Panc1 (cell line): ENCODE measurements at regions of chr1 and their contacts with region 1.

Region 1: DNA sequence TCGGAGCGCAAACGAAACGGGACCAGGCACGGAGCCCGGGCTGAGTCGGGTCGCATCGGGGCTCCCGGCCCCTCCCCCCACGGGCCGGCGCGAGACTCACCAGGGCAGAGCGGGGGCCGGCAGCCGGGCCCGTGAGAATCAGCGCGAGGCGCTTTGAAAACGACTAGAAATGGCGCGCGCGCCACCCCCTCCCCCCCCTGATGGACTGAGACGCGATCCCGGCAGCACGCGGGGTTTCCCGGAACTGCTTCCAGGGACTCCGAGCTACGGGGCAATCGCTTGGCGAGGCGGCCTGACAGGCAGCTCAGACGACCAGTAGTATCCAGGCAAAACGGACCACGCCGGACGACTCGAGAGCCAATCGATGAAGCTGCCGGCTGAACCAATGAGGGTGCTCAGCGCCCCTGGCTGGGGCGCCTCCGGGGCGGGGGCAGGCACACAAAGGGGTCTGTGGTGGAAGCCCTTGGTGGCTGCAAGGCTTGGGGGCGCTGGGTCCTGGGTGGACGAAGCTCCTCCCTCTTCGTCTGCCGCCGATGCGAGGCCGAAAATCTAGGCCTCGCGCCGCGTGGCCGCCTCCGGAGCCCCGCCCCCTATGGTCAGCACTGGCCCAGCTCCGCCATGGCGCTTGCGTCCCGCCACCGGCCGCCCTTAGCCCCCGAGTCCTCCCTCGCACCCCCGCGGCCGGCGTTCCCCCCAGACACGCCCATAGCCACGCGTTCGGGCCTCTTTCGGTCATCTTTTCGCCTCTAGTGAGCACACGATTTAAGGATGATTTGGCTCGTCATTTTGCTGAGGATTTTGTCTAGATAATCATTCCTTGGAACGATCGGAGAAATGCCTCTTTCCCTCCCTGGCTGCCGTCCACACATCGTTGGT is at the start of gene HNRNPR:
- DNase-seq: peak; percentile 98
- ATAC-seq: peak; percentile 96
- H3K4me3 ChIP-seq: peak within 1 kb of the TSS; percentile 81 to 94
- H3K27ac ChIP-seq: peak within 1 kb of the TSS; percentile 100
- H3K4me1 ChIP-seq: peaks cover 25% of the 10 kb centered on the region
- H3K27me3 ChIP-seq: no peaks in the 10 kb centered on the region
- CTCF ChIP-seq: no peak
- total RNA-seq, gene HNRNPR: 173 TPM

Region 2: GRCh38 chr1:22388671-22389450 is 955.5 kb before region 1 on chr1:
- CTCF ChIA-PET with region 1: no interaction called
- POLR2A ChIA-PET with region 1: no interaction called
- in situ Hi-C with region 1: no loop called
- intact Hi-C with region 1: no loop called
- DNase-seq: no peak
- ATAC-seq: no peak
- H3K4me3 ChIP-seq: no peak overlapping the region
- H3K27ac ChIP-seq: no peak overlapping the region
- H3K4me1 ChIP-seq: no peaks in the 10 kb centered on the region
- H3K27me3 ChIP-seq: no peaks in the 10 kb centered on the region; the same call in 1 of the 2 replicates
- CTCF ChIP-seq: no peak

Region 3: GRCh38 chr1:23148084-23148483 is 196.3 kb before region 1 on chr1:
- CTCF ChIA-PET with region 1: no interaction called
- POLR2A ChIA-PET with region 1: no interaction called
- in situ Hi-C with region 1: no loop called
- intact Hi-C with region 1: no loop called
- DNase-seq: no peak
- ATAC-seq: no peak
- H3K4me3 ChIP-seq: no peak overlapping the region
- H3K27ac ChIP-seq: no peak overlapping the region
- H3K4me1 ChIP-seq: peaks cover 11% of the 10 kb centered on the region; the same call in 1 of the 2 replicates
- H3K27me3 ChIP-seq: no peaks in the 10 kb centered on the region
- CTCF ChIP-seq: no peak

Region 4: DNA sequence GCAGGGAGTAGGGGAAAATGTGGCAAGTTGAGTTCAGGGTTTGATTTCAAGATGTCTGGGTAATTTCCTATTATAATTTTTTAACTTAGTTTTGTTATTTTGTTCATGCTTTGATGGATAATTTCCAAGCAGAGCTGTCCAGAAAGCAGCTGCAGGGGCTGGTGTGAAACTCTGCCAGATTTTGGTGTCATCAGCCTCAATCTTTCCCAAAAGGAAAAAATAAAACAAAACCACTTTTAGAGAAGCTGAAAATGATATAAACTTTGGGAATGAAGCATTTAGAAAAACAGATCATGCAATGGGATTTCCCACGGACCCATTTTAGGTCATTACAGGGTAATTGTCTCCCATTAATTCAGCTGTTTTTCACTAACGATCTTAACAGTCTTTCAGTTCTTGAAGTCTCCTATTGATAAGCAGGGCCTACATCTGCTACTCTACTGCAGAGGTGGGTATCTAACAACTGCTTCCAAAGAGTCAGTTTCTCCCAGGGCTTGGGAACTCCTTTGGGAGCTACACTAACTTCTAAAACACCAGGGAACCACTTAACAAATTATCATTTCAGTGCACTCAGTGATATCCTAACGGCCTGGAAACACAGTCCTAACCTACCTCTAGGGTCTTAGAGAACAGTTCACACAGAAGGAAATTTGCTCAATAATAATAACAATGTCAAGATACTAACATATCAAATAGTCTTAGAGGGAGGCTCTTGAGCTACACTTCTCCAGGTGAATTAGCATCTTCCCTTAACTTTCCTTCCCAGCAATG is 13.0 kb after region 1 on chr1:
- CTCF ChIA-PET with region 1: interaction called, 4 read pairs
- POLR2A ChIA-PET with region 1: interaction called, 11 read pairs
- in situ Hi-C with region 1: no loop called
- intact Hi-C with region 1: no loop called
- DNase-seq: no peak
- ATAC-seq: no peak
- H3K4me3 ChIP-seq: no peak overlapping the region
- H3K27ac ChIP-seq: no peak overlapping the region
- H3K4me1 ChIP-seq: no peaks in the 10 kb centered on the region
- H3K27me3 ChIP-seq: no peaks in the 10 kb centered on the region
- CTCF ChIP-seq: no peak

Region 5: DNA sequence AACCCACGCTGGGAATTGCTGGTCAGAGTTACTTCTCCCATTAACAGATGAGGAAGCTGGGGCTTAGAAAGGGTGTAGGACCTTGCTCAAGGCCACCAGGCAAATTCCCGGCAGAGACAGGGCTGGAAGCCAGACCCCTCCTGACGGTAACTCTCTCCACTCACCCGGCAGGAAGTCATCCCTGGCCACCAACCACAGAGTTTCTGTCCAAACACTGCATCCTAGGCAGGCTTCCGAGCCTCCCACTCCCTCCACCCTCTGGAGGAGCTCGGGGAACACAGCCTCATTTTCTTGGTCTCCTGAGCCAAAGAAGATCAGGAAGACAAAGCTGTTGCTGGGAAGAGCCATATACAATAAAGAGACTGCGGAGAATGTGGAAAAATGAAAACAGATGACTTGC is 50.3 kb after region 1 on chr1:
- CTCF ChIA-PET with region 1: no interaction called
- POLR2A ChIA-PET with region 1: interaction called, 10 read pairs
- in situ Hi-C with region 1: no loop called
- intact Hi-C with region 1: no loop called
- DNase-seq: no peak
- ATAC-seq: no peak
- H3K4me3 ChIP-seq: no peak overlapping the region
- H3K27ac ChIP-seq: no peak overlapping the region
- H3K4me1 ChIP-seq: no peaks in the 10 kb centered on the region
- H3K27me3 ChIP-seq: no peaks in the 10 kb centered on the region
- CTCF ChIP-seq: no peak

Region 6: GRCh38 chr1:23403735-23404486 is 59.6 kb after region 1 on chr1:
- CTCF ChIA-PET with region 1: interaction called, 9 read pairs
- POLR2A ChIA-PET with region 1: interaction called, 6 read pairs
- in situ Hi-C with region 1: no loop called
- intact Hi-C with region 1: loop called (anchors 2 kb)
- DNase-seq: peak; percentile 77
- ATAC-seq: peak; percentile 96
- H3K4me3 ChIP-seq: peak overlapping the region; percentile 29 to 48
- H3K27ac ChIP-seq: peak overlapping the region; percentile 95
- H3K4me1 ChIP-seq: peaks cover 25% of the 10 kb centered on the region
- H3K27me3 ChIP-seq: no peaks in the 10 kb centered on the region
- CTCF ChIP-seq: peak; percentile 99

Region 7: GRCh38 chr1:23452011-23452411 is 107.7 kb after region 1 on chr1:
- CTCF ChIA-PET with region 1: interaction called, 4 read pairs
- POLR2A ChIA-PET with region 1: interaction called, 10 read pairs
- in situ Hi-C with region 1: no loop called
- intact Hi-C with region 1: no loop called
- DNase-seq: no peak
- ATAC-seq: peak; percentile 25; the same call in 1 of the 2 replicates
- H3K4me3 ChIP-seq: no peak overlapping the region
- H3K27ac ChIP-seq: no peak overlapping the region
- H3K4me1 ChIP-seq: no peaks in the 10 kb centered on the region
- H3K27me3 ChIP-seq: no peaks in the 10 kb centered on the region
- CTCF ChIP-seq: no peak

Region 8: DNA sequence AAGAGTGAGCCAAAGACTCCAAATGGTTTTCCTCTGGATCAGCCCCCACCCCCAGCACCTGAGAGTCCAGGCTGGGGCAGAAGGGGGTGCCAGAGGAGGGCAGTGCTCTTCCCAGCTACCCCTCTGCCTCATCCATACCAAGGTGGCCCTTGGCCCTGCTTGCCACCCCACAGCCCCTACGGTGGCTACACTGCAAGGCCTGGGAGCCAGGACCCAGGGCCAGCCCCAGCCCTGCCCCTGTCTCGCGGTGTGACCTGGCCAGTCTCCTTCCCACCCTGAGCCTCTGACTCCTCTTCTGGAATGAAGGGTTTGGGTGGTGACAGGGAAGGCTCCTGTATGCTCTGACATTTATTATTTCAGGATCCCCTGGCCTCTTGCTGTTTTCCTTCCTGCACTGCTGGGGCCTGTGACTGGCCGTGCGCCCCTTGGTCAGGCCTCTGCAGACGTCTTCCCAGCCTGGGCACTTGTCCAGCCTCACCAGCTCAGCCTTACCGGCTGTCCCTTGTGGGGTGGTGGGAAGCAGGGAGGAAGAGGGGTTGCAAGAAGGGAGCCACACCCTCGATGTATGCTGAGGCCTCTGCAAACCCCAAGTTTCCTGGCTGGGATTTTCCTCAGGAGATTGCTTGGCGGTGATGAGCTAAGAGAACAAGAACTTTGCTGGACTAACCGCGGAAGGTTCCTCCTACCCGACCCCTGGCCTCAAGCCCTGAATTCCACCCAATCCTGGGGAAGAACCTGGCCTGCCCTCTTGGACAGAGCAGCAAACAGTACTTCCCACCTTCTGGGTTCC is 126.1 kb after region 1 on chr1:
- CTCF ChIA-PET with region 1: no interaction called
- POLR2A ChIA-PET with region 1: no interaction called
- in situ Hi-C with region 1: no loop called
- intact Hi-C with region 1: no loop called
- DNase-seq: no peak
- ATAC-seq: no peak
- H3K4me3 ChIP-seq: no peak overlapping the region
- H3K27ac ChIP-seq: no peak overlapping the region
- H3K4me1 ChIP-seq: peaks cover 13% of the 10 kb centered on the region
- H3K27me3 ChIP-seq: no peaks in the 10 kb centered on the region
- CTCF ChIP-seq: no peak

Region 9: DNA sequence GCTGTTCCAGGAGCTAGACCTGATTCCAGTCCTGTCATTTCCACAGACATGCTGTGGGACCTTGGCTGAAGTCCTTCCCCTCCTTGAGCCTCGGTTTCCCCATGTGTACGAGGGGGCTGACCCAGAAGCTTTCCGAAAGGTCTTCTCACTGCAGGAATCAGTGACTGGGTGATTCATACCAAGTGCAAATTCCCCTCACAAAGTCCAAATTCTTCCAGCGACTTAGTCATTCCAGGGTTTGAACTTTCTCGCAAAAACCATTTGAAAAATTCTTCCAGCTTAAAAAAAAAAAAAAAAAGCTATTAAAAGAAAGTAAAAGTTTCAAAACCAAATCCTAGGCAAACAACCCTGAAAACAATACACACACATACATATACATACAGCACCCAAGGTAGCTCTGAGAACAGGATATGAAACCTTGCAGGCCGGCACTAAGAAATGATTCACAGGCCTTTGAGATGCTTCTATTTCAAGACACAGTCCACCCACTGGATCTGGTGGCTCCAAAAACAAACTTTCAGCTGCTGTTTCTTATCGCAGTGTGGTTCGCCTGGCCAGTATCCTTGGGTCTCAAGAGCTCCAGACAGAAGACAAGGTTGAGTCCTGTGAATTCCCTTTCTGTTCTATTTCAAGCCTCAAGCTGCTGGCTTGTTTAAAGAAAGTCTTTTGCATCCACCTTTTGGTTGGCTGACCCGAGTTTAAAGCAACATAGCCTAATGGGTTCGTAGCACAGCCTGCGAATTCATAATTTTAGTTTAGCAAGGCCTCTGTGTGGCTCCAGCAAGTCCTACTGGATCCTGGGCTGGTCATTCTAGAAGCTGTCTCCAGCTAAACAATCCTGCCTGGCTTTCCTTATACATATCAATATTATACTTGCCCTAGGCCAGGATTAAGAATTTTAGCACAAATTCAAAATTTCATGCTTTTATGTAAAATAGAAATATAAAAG is 233.0 kb after region 1 on chr1:
- CTCF ChIA-PET with region 1: no interaction called
- POLR2A ChIA-PET with region 1: no interaction called
- in situ Hi-C with region 1: no loop called
- intact Hi-C with region 1: no loop called
- DNase-seq: no peak
- ATAC-seq: peak; percentile 73; the same call in 1 of the 2 replicates
- H3K4me3 ChIP-seq: no peak overlapping the region
- H3K27ac ChIP-seq: peak overlapping the region; percentile 42
- H3K4me1 ChIP-seq: peaks cover 17% of the 10 kb centered on the region
- H3K27me3 ChIP-seq: no peaks in the 10 kb centered on the region
- CTCF ChIP-seq: no peak

Region 10: GRCh38 chr1:23906731-23907130 is 562.4 kb after region 1 on chr1:
- CTCF ChIA-PET with region 1: no interaction called
- POLR2A ChIA-PET with region 1: interaction called, 10 read pairs
- in situ Hi-C with region 1: no loop called
- intact Hi-C with region 1: no loop called
- DNase-seq: no peak
- ATAC-seq: no peak
- H3K4me3 ChIP-seq: no peak overlapping the region
- H3K27ac ChIP-seq: no peak overlapping the region
- H3K4me1 ChIP-seq: no peaks in the 10 kb centered on the region
- H3K27me3 ChIP-seq: peaks cover 6% of the 10 kb centered on the region
- CTCF ChIP-seq: no peak